Right ventricle myocardium inferior (tissue), 1 donor: ENCODE measurements at regions of chr1 and their contacts with region 1.

Region 1: DNA sequence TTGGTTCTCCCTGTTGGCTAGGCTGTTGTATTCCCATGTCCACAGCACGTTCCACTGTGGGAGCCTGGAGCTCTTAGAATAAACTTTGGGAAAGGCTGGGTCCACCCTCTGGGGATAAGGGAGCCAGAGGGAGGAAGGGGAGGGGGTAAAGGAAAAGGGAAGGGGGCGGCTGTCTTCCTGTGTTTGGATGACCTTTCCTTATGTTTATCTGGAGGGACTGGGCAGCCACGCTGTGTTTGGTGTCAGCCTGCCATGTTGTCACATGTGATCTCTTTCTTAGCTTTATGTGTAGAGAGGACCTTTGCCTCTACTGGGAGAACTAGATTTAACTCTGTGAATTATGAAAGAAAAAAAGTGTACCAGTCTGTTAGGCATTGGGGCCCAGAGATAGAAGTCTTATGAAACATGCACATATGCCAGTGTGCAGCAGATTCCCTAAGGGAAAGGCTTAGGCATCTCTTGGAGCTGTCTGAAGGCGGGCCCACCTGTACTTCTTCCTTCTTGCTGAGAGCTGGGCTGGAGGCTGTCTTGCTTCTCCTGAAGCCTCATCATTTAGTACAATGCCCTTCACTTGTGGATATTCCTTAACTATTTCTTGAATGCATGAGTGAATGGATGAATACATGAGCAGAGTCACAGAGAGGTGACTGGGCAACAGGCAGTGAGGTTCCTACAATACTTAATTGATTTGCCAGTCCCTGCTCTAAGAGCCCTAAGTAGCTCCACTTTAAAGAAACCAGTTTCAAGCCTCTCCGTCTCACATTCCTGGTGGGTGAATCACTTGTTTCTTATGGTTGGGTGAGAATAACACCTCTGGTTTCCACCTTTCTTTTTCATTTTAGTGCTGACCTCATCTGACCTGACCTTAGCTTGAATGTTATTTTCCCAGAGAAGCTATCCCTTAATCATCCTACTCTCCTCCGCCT is 62.5 kb upstream of the ARHGAP29 start:
- DNase-seq: peak; percentile 57
- ATAC-seq: peak; percentile 50

Region 2: DNA sequence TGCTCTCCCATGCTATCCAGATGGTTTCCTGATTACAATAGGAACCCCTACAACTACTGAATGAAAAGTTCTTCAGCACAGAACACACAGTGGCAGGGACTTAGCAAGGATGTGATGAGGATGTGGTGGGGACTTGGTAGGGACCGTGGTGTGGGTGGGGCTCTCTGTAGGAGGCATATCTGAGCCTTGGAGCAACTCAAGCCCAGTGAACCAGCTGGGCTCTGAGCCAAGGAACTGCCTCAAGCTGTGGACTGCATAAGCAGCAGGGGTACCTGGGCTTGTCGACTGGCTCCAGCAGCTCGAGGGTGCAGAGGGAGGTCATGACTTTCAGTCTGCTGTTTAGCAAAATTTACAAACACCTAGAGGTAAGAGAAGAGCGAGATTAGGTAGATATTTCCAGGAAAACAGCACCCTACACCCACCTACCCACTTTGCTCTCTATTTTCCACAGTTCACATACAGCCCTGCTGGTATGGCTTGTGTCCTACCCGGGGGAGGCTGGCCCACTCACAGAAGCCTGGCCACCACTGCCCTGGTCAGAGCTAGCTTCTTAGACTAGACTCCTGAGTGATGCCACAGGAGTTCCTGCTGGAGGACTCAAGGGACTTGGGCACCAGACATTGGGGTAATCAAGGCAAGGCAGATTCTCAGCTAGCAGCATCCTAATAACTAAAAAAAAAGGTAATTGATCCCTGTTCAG is 303.9 kb before region 1 on chr1:
- intact Hi-C with region 1: no loop called
- DNase-seq: no peak
- ATAC-seq: no peak

Region 3: DNA sequence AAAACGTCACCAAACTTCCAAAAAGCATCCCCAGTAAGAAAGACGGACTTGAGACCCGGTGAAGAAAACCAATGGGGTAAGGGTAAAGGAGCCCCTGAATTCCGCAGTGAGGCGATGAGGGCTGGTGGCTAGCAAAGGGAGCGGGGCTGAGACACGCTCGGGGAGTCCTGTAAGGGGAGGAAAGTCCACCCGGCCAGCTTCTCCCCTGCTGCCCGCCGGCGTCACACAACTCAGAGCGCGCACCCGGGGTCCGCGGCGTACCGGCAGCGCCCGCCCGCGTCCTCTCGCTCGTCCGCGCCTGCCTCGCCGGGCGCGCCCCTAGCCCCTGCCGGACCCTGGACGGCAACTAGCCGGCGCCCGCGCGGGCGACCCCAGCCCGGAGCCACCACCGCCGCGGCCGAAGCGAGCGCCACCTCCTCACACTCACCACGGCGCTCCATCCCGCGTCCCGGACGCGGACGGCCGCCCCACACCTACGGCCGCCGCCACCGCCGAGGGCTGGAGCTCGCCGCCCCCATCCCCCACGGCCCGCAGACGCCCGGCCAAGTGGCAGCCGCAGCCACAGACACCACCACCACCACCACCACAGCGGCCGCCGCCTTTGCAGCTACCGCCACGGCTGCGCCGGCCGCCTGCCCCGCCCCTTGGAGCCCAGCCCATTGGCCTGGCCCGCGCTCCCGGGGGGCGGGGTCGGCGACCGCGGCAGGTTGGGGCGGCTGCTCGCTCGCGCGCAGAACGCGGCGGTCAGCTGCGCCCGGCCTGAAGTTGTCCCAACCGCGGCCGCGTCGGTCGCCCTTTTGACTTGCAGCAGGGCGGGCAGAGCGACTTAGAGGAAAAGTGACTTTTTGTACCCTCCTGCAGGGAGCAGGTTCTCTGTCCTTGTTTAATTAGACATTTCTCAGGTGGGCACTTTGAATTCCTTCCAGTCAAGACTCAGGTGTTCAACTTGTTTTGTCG is 52.5 kb before region 1 on chr1:
- intact Hi-C with region 1: loop called (anchors 2 kb)
- DNase-seq: peak; percentile 91
- ATAC-seq: peak; percentile 96

Region 4: DNA sequence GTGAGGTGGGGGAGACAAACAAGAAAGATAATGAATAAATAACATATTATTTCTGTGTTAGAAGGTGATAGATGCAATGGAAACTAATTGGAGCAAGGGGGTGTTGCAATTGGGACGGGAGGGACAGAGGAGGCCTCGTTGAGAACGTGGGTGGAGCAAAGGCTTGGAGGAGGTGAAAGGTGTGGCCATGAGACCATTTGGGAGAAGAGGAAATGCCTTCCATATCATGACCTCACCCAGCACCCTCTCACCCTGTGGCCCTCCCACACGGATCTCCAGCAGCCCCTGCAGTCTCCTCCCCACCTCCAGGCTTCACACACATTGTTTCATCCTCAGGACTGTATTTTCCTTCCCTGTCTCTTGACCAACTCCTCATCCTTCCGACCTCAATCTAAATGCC is 22.8 kb after region 1 on chr1:
- intact Hi-C with region 1: loop called (anchors 2 kb)
- DNase-seq: no peak
- ATAC-seq: no peak